Activated T-helper 2 cell treated with anti-CD3 and anti-CD28 coated beads, Interferon-gamma antibody, Interleukin-2, Interleukin-4, amounts not matched to agents 10 μg/mL and 5 μg/mL and 100 μg/mL, durations not matched to agents 14 hours and 24 hours and 36 hours (primary cell): ENCODE measurements at regions of chr9 and their contacts with region 1.

Region 1: GRCh38 chr9:6197330-6197729 is 18.3 kb upstream of the IL33 start:
- DNase-seq: no peak
- H3K4me3 Mint-ChIP-seq: no peak overlapping the region
- H3K27ac Mint-ChIP-seq: no peak overlapping the region
- H3K4me1 Mint-ChIP-seq: no peaks in the 10 kb centered on the region
- H3K27me3 Mint-ChIP-seq: peaks cover 12% of the 10 kb centered on the region

Region 2: DNA sequence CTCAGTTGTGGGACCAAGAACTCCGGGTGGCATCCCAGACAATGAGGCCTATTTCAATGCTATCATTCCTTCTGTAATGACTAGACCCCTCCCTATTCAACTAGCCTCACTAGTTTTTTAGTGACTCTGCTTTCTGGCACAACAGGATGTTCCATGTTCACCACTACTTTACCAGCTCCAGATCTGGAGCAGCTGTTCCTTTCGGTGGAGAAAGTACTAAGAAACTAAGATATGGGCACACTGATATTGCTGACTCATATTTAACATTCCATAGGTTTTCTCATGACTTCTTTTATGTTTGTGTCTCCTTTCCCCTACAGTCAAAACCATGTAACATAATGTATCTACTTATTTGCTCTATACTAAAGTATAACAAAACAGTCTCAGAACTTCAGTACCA is 42.4 kb after region 1 on chr9:
- intact Hi-C with region 1: loop called (anchors 2 kb)
- DNase-seq: no peak
- H3K4me3 Mint-ChIP-seq: no peak overlapping the region
- H3K27ac Mint-ChIP-seq: no peak overlapping the region
- H3K4me1 Mint-ChIP-seq: peaks cover 8% of the 10 kb centered on the region
- H3K27me3 Mint-ChIP-seq: peaks cover 13% of the 10 kb centered on the region

Region 3: GRCh38 chr9:6305954-6306563 is 108.7 kb after region 1 on chr9:
- intact Hi-C with region 1: loop called (anchors 2 kb)
- DNase-seq: no peak
- H3K4me3 Mint-ChIP-seq: no peak overlapping the region
- H3K27ac Mint-ChIP-seq: no peak overlapping the region
- H3K4me1 Mint-ChIP-seq: no peaks in the 10 kb centered on the region
- H3K27me3 Mint-ChIP-seq: peaks cover 22% of the 10 kb centered on the region